Panc1 (cell line): ENCODE measurements at regions of chr10 and their contacts with region 1.

Region 1: DNA sequence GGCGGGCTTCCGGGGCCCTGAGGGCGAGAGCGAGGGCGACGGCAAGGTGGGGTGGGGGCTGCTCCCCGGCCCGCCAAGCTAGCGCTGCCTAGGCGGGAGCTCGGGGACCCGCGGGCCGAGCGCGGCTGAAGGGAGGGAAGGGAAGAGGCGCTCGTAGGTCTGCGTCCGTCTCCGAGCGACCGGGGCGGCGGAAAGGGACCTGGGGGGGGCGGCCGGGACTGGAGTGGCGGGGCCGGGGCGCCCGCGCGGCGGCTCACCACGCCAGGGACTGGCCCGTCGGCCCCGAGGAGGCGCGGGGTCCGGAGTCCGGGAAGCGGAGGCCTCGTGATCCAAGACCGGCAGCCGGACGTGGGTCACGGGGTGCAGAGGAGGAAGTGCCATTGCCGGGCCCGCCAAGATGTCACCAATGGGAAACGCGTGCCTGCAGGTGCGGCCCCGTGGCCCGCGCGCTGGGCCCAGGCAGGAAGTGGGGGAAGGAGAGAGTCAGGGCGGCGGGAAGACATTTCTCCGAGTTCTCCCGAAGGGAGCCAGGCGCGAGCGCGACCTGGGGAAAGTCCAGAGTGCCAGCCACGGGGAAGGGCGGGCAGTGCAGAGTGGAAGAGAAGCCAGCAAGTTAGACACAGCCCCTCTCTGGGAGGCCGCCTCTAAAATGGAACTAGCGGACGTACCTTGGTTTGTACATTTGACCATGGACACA is 11.9 kb downstream of the HNRNPF start:
- DNase-seq: no peak
- ATAC-seq: peak; percentile 86
- H3K4me3 ChIP-seq: peak overlapping the region; percentile 67 to 84
- H3K27ac ChIP-seq: peak overlapping the region; percentile 95
- H3K4me1 ChIP-seq: peaks cover 56% of the 10 kb centered on the region
- H3K27me3 ChIP-seq: no peaks in the 10 kb centered on the region
- CTCF ChIP-seq: no peak

Region 2: DNA sequence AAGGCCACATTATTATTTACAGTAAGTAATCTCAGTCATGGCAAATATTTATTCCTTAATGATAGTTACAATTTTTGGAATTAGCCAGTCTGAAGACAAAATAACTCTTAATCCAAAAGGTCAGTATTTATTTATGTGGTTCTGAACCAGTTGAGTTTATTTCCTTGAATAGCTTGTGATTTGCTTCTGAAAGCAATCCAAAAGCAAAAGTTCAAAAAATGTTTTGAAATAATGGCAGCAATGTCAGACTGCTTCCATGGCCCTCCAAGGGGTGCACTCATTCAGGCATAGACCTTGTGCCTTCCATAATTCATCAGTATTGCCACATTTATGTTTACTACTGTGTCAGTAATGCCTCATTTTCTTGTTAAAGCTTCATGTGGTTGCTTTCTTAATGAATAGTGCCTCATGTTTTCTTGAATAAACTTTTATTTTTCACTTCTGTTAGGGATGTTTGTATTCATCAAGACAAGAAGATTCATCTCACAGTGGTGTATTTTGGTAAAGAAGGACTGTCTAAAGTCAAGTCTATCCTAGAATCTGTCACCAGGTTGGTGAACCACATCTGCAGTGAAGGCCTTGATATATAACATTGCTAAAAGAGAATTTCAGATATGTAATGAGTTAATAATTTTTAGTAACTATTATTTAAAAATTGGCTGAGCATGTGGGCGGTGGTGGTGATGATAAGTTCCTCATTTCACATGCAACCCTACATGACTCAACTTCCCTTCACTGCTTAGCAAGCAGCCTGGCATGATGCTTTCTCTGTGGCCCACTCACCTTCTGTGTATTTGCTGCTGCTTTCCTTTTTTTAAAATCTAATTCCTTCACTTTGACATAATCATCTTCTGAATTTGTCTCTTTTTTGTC is 236.8 kb before region 1 on chr10:
- CTCF ChIA-PET with region 1: no interaction called
- POLR2A ChIA-PET with region 1: interaction called, 11 read pairs
- in situ Hi-C with region 1: no loop called
- intact Hi-C with region 1: no loop called
- DNase-seq: no peak
- ATAC-seq: no peak
- H3K4me3 ChIP-seq: no peak overlapping the region
- H3K27ac ChIP-seq: no peak overlapping the region
- H3K4me1 ChIP-seq: peaks cover 4% of the 10 kb centered on the region; the same call in 1 of the 2 replicates
- H3K27me3 ChIP-seq: no peaks in the 10 kb centered on the region
- CTCF ChIP-seq: no peak

Region 3: GRCh38 chr10:43407576-43408330 is 10.7 kb after region 1 on chr10:
- CTCF ChIA-PET with region 1: no interaction called
- POLR2A ChIA-PET with region 1: interaction called, 11 read pairs
- in situ Hi-C with region 1: no loop called
- intact Hi-C with region 1: no loop called
- DNase-seq: peak; percentile 57
- ATAC-seq: peak; percentile 65
- H3K4me3 ChIP-seq: peak overlapping the region; percentile 68 to 96
- H3K27ac ChIP-seq: peak overlapping the region; percentile 93
- H3K4me1 ChIP-seq: peaks cover 20% of the 10 kb centered on the region
- H3K27me3 ChIP-seq: no peaks in the 10 kb centered on the region
- CTCF ChIP-seq: no peak

Region 4: DNA sequence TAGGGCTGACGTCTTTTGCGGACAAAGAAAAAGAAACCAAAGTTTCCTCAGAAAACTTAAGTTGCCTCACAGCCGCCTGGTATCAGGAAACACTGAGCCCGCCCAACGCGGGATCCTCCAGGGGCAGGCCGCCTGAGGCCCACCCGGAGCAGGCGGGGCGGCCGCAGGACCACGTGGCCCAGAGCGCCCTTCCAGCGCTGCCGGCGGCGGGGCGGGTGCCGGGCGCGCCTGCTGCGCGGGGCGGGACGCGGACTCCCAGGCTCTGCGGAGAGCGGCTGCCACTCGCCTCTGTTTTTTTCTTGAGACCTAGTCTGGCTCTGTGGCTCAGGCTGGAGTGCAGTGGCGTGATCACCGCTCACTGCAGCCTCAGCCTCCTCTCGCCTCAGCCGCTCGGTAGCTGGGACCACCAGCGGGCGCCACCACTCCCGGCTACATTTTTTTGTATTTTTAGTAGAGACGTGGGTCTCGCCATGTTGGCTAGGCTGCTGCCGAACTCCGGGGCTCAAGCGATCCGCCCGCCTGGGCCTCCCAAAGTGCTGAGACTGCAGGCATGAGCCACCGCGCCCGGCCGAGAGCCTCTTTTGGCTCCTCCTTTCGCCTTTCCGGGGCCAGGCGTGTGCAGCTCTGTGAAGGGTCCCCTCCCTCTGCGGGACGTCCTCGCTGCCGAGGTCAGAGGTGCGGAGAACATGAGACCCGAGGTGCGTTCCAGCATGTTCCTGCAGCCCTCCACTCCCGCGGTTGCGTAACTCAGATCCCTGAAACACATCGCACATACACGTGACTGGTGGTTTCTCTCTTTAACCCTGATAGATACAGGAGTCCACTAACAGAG is 23.5 kb after region 1 on chr10:
- CTCF ChIA-PET with region 1: no interaction called
- POLR2A ChIA-PET with region 1: no interaction called
- in situ Hi-C with region 1: no loop called
- intact Hi-C with region 1: no loop called
- DNase-seq: no peak
- ATAC-seq: peak; percentile 97
- H3K4me3 ChIP-seq: peak overlapping the region; percentile 46 to 67
- H3K27ac ChIP-seq: peak overlapping the region; percentile 98
- H3K4me1 ChIP-seq: peaks cover 13% of the 10 kb centered on the region
- H3K27me3 ChIP-seq: no peaks in the 10 kb centered on the region
- CTCF ChIP-seq: no peak

Region 5: DNA sequence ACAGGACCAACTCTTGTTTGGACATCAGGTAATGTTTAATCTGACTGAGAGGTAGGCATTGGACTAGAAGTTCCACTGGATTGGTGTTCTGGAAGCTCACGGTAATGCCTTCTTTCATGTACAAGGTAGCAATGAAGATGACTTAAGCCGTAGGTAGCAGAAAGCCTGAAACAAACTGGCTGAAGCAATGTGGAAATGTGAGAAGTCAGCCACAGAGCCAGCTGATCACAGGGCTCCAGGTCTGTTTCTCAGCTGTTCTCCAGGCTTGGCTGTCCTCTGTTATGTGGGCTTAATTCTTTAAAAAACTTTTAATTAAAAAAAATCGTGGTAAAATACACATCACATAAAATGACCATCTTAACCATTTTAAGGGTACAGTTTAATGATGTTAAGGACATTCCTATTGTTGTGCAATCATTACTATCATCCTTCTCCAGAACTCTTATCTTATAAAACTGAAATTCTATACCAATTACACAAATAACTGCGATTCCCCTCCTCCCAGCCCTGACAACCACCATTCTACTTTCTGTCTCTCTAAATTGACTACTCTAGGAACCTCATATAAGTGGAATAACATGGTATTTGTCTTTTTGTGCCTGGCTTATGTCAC is 353.0 kb after region 1 on chr10:
- CTCF ChIA-PET with region 1: no interaction called
- POLR2A ChIA-PET with region 1: interaction called, 18 read pairs
- in situ Hi-C with region 1: no loop called
- intact Hi-C with region 1: no loop called
- DNase-seq: no peak
- ATAC-seq: 0 out of 2 replicates have a peak, but pooled peaks have one; percentile 17
- H3K4me3 ChIP-seq: no peak overlapping the region
- H3K27ac ChIP-seq: no peak overlapping the region
- H3K4me1 ChIP-seq: no peaks in the 10 kb centered on the region
- H3K27me3 ChIP-seq: peaks cover 7% of the 10 kb centered on the region; the same call in 1 of the 2 replicates
- CTCF ChIP-seq: no peak

Region 6: GRCh38 chr10:43922335-43923280 is 525.5 kb after region 1 on chr10:
- CTCF ChIA-PET with region 1: no interaction called
- POLR2A ChIA-PET with region 1: no interaction called
- in situ Hi-C with region 1: no loop called
- intact Hi-C with region 1: no loop called
- DNase-seq: no peak
- ATAC-seq: no peak
- H3K4me3 ChIP-seq: no peak overlapping the region
- H3K27ac ChIP-seq: no peak overlapping the region
- H3K4me1 ChIP-seq: no peaks in the 10 kb centered on the region
- H3K27me3 ChIP-seq: peaks cover 7% of the 10 kb centered on the region; the same call in 1 of the 2 replicates
- CTCF ChIP-seq: no peak